Activated CD4-positive, alpha-beta T cell treated with anti-CD3 and anti-CD28 coated beads, Interleukin-2, amount 10 ng/mL, durations not matched to agents 24 days and 14 days (primary cell): ENCODE measurements at regions of chr14 and their contacts with region 1.

Region 1: DNA sequence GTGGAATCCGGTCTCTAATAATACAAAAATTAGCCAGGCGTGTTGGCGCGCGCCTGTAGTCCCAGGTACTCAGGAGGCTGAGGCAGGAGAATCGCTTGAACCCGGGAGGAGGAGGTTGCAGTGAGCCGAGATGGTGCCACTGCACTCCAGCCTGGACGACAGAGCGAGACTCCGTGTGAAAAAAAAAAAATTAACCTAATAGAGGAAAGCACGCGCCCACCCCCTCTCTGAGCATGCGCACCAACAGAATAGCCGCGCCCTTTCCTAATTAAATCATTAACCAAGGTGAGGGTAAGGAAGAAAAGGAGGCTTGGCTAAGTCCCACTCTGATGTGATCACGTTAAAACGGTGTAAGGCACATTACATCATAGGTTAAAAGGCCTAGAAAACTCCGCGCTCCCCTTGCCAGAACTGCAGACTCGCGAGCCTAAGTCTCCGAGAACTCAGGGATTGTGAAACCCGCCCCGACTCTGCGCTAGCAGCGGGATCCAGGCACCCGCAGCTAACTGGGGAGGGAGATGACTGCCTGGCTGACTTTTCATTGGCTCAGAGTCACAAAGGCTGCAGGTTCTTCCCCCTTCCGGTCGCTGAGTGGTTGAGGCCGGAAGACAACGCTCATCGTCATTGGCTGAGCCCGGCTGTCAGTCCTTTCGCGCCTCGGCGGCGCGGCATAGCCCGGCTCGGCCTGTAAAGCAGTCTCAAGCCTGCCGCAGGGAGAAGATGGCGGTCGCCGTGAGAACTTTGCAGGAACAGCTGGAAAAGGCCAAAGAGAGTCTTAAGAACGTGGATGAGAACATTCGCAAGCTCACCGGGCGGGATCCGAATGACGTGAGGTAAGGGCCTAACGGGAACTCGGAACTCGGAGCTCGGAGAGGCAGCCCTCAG is at the start of gene PNN:
- DNase-seq: peak; percentile 99
- H3K4me3 Mint-ChIP-seq: peak within 1 kb of the TSS; percentile 94
- H3K27ac Mint-ChIP-seq: peak within 1 kb of the TSS; percentile 96
- H3K4me1 Mint-ChIP-seq: peaks cover 34% of the 10 kb centered on the region
- H3K27me3 Mint-ChIP-seq: no peaks in the 10 kb centered on the region
- total RNA-seq, gene PNN: 121 and 128 TPM in 2 replicates

Region 2: DNA sequence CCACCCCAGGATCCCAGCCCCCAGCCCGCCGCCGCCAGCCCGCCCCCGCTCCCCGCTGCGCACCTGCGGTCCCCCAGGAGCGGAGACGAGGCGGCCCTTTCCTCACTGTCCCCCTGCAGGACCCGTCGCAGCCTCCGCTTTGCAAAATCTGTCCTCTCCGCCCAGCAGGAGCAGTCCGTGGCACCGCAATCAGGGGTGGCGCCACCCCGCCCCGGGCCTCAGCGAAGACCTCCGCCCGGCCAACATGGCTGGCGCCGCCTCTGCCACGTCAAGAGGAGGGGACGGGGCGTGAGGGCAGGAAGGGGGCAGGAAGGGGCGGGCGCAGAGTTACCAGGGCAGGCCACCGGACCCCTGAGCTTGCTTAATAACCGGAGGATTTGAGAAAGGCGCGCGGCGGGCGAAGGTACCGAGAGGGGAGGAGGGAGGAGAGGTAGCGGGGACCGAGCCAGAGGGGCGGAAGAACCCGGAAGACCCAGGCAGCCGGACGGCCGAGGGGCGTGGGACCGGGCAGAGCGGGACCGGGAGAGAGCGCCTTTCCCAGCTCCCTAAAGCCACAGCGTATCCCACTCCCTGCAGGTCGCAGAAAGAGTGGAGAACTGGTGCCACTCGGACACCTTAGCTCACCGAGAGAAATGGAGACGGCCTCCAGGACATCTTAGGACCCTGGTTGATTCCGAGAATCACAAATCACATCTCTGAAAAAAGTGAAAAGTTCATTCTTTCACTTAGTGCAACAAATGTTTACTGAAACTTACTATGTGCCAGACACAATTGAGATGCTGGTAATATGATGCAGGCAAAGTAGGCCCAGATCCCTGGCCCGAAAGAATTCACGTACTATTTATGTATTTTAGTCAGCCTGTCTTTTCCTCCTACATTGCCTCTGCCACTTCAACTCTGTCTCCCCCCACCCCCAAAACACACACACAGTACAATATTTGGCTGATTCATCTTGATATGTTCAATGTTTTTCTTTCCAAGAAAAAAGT is 71.5 kb before region 1 on chr14 and contains the start of gene SEC23A:
- intact Hi-C with region 1: loop called (anchors 1 kb)
- DNase-seq: peak; percentile 96
- H3K4me3 Mint-ChIP-seq: peak within 1 kb of the TSS; percentile 98
- H3K27ac Mint-ChIP-seq: peak within 1 kb of the TSS; percentile 99
- H3K4me1 Mint-ChIP-seq: peaks cover 32% of the 10 kb centered on the region
- H3K27me3 Mint-ChIP-seq: no peaks in the 10 kb centered on the region
- total RNA-seq, gene SEC23A: 63.5 and 65.8 TPM in 2 replicates

Region 3: GRCh38 chr14:39114073-39114838 is 60.5 kb before region 1 on chr14 and contains the start of gene GEMIN2:
- intact Hi-C with region 1: loop called (anchors 1 kb)
- DNase-seq: peak; percentile 98
- H3K4me3 Mint-ChIP-seq: peak within 1 kb of the TSS; percentile 98
- H3K27ac Mint-ChIP-seq: peak within 1 kb of the TSS; percentile 97
- H3K4me1 Mint-ChIP-seq: peaks cover 18% of the 10 kb centered on the region
- H3K27me3 Mint-ChIP-seq: no peaks in the 10 kb centered on the region
- total RNA-seq, gene GEMIN2: 23.1 and 24.9 TPM in 2 replicates

Region 4: DNA sequence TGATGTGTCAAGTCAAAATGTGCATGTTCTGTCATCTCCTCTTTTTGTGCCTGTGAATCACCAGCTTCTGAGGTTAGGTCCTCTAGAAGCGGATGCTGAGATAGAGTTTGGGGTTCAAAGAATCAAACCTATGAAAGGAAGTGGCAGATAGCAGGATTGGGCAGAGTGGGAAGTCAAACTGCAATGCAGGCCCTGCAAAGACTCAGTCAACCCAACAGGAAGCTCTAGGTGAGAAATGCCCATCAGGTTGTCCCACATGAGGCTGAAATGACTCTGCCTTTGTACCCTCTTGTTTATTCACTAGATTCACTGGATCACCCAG is 54.4 kb after region 1 on chr14:
- intact Hi-C with region 1: loop called (anchors 1 kb)
- DNase-seq: peak; percentile 91
- H3K4me3 Mint-ChIP-seq: peak overlapping the region; percentile 54
- H3K27ac Mint-ChIP-seq: peak overlapping the region; percentile 90
- H3K4me1 Mint-ChIP-seq: peaks cover 38% of the 10 kb centered on the region
- H3K27me3 Mint-ChIP-seq: no peaks in the 10 kb centered on the region

Region 5: GRCh38 chr14:39266871-39267591 is 92.2 kb after region 1 on chr14:
- intact Hi-C with region 1: loop called (anchors 1 kb)
- DNase-seq: peak; percentile 94
- H3K4me3 Mint-ChIP-seq: peak overlapping the region; percentile 82
- H3K27ac Mint-ChIP-seq: peak overlapping the region; percentile 81
- H3K4me1 Mint-ChIP-seq: peaks cover 39% of the 10 kb centered on the region
- H3K27me3 Mint-ChIP-seq: no peaks in the 10 kb centered on the region

Region 6: GRCh38 chr14:39368261-39368959 is 193.6 kb after region 1 on chr14:
- intact Hi-C with region 1: loop called (anchors 5 kb)
- DNase-seq: peak; percentile 80
- H3K4me3 Mint-ChIP-seq: no peak overlapping the region
- H3K27ac Mint-ChIP-seq: no peak overlapping the region
- H3K4me1 Mint-ChIP-seq: peaks cover 2% of the 10 kb centered on the region
- H3K27me3 Mint-ChIP-seq: no peaks in the 10 kb centered on the region